Kidney (tissue), 22 donors: ENCODE measurements at regions of chr3 and their contacts with region 1.

Region 1: GRCh38 chr3:17278006-17278405 is 393.3 kb downstream of the PLCL2 start:
- DNase-seq: no peak
- H3K4me3 ChIP-seq: no peak overlapping the region
- H3K27ac ChIP-seq: no peak overlapping the region
- H3K4me1 ChIP-seq: no peaks in the 10 kb centered on the region
- H3K27me3 ChIP-seq: no peaks in the 10 kb centered on the region
- CTCF ChIP-seq: no peak

Region 2: GRCh38 chr3:17140670-17141505 is 137.1 kb before region 1 on chr3:
- intact Hi-C with region 1: no loop called
- DNase-seq: no peak
- H3K4me3 ChIP-seq: no peak overlapping the region
- H3K27ac ChIP-seq: no peak overlapping the region
- H3K4me1 ChIP-seq: no peaks in the 10 kb centered on the region
- H3K27me3 ChIP-seq: no peaks in the 10 kb centered on the region
- CTCF ChIP-seq: no peak

Region 3: DNA sequence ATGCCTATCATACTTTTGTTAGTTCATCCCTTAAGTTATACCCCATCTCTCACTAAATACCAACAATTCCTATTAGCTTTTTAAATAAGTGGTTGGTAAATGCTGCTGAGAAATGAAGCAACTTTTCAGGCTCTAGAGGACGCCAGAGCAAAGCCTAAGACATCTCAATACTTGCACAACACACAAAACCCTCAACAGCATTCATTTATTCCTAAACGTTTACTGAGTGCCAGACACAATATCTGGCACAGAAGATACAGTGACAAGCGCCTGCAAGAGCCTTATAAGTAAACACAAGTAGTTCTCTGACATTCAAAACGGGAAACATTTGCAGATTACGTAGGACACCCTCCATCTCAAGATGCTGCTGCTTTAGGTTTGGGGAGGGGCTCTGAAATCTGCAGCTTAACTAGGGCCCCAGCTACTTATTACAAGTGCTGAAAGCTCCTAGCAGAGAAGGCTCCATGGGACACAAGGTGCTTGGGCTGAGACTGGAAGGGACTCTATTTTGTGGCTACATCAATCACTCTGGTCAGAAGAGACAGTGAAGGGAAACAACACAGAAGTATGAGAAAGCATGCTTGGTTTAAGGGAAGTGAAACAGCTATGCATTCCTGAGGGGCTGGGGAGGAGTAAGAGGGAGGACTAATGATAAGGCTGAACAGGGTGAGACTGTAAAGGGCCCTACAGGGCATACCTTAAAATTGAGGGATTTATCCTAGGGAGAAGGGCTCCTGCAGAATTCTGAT is 82.0 kb before region 1 on chr3:
- intact Hi-C with region 1: no loop called
- DNase-seq: no peak
- H3K4me3 ChIP-seq: no peak overlapping the region
- H3K27ac ChIP-seq: no peak overlapping the region
- H3K4me1 ChIP-seq: no peaks in the 10 kb centered on the region
- H3K27me3 ChIP-seq: no peaks in the 10 kb centered on the region
- CTCF ChIP-seq: peak; percentile 13

Region 4: GRCh38 chr3:17412950-17413530 is 135.0 kb after region 1 on chr3:
- intact Hi-C with region 1: loop called (anchors 10 kb)
- DNase-seq: peak in 3 of 5 donors; percentile 15 to 63 (median 45)
- H3K4me3 ChIP-seq: no peak overlapping the region
- H3K27ac ChIP-seq: no peak overlapping the region
- H3K4me1 ChIP-seq: peaks cover 0 to 4% (median 0%) of the 10 kb centered on the region in 3 donors
- H3K27me3 ChIP-seq: no peaks in the 10 kb centered on the region
- CTCF ChIP-seq: peak; percentile 79